ENCODE measurements at regions of chr1 and their contacts with region 1.

Region 1: DNA sequence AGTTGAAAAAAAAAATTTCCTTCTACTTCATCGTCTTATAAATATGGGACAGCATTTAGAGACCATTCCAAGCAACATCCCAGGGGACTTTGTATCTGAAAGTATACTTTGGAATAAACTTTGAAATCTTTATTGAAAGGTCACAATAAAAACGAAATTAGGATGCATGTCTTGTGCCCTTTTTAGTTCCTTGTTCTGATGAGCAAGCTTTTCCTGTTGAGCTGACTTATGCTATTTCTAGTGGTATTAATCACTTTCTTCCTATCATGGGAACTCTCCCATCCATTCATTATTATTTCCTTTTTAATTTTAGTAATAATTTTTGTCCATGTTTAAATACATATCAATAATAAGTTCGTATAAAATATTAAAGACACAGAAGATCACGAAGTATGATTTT is 4.0 kb upstream of the GBP2 start:
- DNase-seq: no peak
- ATAC-seq: no peak
- H3K4me3 ChIP-seq: no peak overlapping the region
- H3K27ac ChIP-seq: no peak overlapping the region
- H3K4me1 ChIP-seq: peaks cover 3 to 6% of the 10 kb centered on the region in 2 donors
- H3K27me3 ChIP-seq: no peaks in the 10 kb centered on the region

Region 2: DNA sequence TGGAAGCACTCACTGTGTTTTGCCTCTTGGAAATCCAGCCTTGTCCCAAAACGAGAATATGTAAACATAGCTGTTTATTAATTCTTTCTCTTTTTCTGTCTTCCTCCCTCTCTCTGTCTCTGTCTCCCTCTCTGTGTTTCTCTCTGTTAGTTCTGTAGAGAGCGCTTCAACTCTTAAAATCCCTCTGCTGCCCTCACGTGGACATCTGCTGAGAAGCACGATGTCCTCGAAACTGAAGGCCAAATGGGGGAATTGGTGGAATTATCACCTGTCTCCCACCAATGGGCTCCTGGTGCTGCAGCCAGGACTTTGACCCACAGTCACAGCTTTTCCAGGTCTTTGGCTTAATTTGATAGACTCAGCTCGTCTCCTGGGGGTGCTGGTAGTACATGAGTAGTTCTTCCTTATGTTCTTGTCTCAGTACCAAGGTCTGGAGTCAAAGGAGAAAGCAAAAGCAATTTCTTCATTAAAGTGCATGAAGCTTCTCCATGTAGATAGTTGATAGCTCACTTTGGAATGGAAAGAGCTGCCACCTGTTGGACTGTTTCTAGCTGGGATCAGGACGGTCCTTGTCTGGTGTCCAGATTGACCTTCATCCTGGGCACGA is 228.5 kb after region 1 on chr1:
- intact Hi-C with region 1: loop called in 1 of 2 experiments (anchors 10 kb)
- DNase-seq: peak; percentile 82 to 89
- ATAC-seq: peak; percentile 90
- H3K4me3 ChIP-seq: no peak overlapping the region
- H3K27ac ChIP-seq: no peak overlapping the region
- H3K4me1 ChIP-seq: no peaks in the 10 kb centered on the region
- H3K27me3 ChIP-seq: no peaks in the 10 kb centered on the region